ENCODE measurements at regions of chr1 and their contacts with region 1.

Region 1: DNA sequence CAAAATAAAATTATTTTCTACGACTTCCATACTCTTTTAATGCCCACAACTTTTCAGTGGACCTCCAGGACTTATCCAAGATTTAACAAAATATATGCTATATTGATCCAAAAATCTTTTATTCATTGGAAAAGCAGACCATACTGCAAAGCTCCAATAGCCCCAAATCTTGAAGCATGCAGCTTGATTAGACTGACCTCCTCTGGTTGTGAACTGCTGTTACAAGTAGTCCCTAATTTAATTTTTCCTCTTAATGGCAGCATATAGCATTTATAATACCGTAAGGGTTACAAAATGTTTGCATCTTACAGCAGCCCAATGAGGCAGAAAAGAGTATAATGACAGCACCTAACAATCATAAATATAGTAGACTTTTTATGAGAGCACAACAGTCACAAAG is 49.8 kb downstream of the TPR start:
- DNase-seq: no peak
- ATAC-seq: peak; percentile 57
- H3K4me3 ChIP-seq: no peak overlapping the region
- H3K27ac ChIP-seq: no peak overlapping the region
- H3K4me1 ChIP-seq: no peaks in the 10 kb centered on the region
- H3K27me3 ChIP-seq: no peaks in the 10 kb centered on the region
- CTCF ChIP-seq: peak; percentile 23 to 35 (median 32); a peak in 4 of 6 replicates
- EP300 ChIP-seq: no peak
- POLR2A ChIP-seq: no peak
- RAD21 ChIP-seq: peak; percentile 48

Region 2: DNA sequence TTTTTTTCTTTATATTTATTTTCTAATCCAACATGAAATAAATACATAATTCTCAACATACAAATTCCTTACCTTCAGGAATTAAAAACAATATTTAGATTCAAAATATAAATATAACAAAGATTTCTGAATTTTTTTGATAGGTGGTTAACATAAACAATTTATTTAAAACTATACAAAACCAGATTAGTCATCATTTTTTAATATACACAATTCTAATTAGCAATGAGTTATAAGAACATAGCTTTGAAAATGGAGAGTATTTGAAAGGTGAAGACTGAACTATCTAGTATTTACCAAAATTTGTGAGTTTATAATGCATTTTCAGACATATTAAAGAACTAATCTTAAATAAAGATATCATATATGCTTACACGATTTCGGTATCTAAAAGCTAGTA is 12.3 kb after region 1 on chr1:
- CTCF ChIA-PET with region 1: interaction called, 15 read pairs
- POLR2A ChIA-PET with region 1: no interaction called
- RAD21 ChIA-PET with region 1: no interaction called
- SMC1A ChIA-PET with region 1: interaction called, 6 read pairs
- in situ Hi-C with region 1: no loop called
- intact Hi-C with region 1: no loop called
- DNase-seq: no peak
- ATAC-seq: no peak
- H3K4me3 ChIP-seq: no peak overlapping the region
- H3K27ac ChIP-seq: no peak overlapping the region
- H3K4me1 ChIP-seq: no peaks in the 10 kb centered on the region
- H3K27me3 ChIP-seq: no peaks in the 10 kb centered on the region
- CTCF ChIP-seq: no peak
- EP300 ChIP-seq: no peak
- POLR2A ChIP-seq: no peak
- RAD21 ChIP-seq: no peak